ENCODE measurements at regions of chr14 and their contacts with region 1.

Region 1: GRCh38 chr14:54691525-54692283 is 124.8 kb downstream of the SAMD4A start:
- DNase-seq: peak; percentile 64
- H3K4me3 ChIP-seq: no peak overlapping the region
- H3K27ac ChIP-seq: no peak overlapping the region
- H3K4me1 ChIP-seq: no peaks in the 10 kb centered on the region
- H3K27me3 ChIP-seq: no peaks in the 10 kb centered on the region
- CTCF ChIP-seq: peak; percentile 49 to 84 (median 68)
- POLR2A ChIP-seq: no peak

Region 2: GRCh38 chr14:54175298-54175942 is 516.3 kb before region 1 on chr14:
- intact Hi-C with region 1: no loop called
- DNase-seq: peak; percentile 59
- H3K4me3 ChIP-seq: no peak overlapping the region
- H3K27ac ChIP-seq: no peak overlapping the region
- H3K4me1 ChIP-seq: no peaks in the 10 kb centered on the region
- H3K27me3 ChIP-seq: no peaks in the 10 kb centered on the region
- CTCF ChIP-seq: peak; percentile 67 to 84 (median 81)
- POLR2A ChIP-seq: no peak

Region 3: DNA sequence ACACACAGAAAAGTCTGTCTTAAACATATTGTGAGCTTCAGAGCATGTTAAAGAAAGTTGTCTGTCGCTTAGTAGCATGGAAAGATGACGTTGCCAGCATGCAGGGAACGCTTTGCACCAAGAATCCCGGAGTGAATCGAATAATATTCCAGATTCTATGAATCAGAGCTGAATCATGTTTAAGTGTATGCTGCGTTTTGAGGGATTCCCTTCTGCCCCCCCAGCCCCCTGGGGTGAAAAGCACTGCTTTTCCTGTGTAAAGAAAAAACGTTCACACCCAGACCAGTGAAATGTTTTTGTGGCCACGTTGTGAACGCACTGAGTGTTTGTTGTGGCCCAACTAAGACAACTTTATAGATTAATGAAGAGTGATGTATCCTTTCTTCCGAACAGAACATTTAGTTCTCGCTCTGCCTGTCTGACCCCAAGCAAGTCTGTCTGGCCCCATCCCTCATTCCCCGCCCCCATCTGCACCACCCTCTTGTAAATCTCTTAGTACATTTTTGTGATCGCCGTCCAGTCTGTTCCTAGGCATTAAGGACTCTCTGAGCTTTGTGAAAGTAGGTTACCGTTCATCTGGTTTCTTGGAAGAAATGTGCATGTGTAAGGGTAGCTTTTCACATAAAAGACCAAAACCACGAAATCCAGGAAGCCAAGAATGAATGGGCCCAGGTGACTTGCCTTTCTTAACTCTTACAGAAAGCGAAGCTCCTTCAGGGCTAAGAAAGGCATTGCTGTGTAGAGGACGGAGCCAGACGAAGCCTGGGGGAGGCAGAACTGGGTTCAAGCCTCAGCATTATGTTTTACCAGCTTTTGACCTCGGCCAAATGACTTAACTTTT is 21.8 kb before region 1 on chr14:
- intact Hi-C with region 1: no loop called
- DNase-seq: peak; percentile 74
- H3K4me3 ChIP-seq: no peak overlapping the region
- H3K27ac ChIP-seq: peak overlapping the region; percentile 72 to 73
- H3K4me1 ChIP-seq: no peaks in the 10 kb centered on the region
- H3K27me3 ChIP-seq: no peaks in the 10 kb centered on the region
- CTCF ChIP-seq: no peak
- POLR2A ChIP-seq: no peak

Region 4: GRCh38 chr14:54773171-54773975 is 81.7 kb after region 1 on chr14:
- intact Hi-C with region 1: loop called (anchors 5 kb)
- DNase-seq: peak; percentile 70
- H3K4me3 ChIP-seq: no peak overlapping the region
- H3K27ac ChIP-seq: peak overlapping the region; percentile 67 to 78
- H3K4me1 ChIP-seq: no peaks in the 10 kb centered on the region
- H3K27me3 ChIP-seq: no peaks in the 10 kb centered on the region
- CTCF ChIP-seq: peak; percentile 38 to 77 (median 58)
- POLR2A ChIP-seq: peak; percentile 2